CD4-positive, alpha-beta memory T cell (primary cell): ENCODE measurements at regions of chr9 and their contacts with region 1.

Region 1: DNA sequence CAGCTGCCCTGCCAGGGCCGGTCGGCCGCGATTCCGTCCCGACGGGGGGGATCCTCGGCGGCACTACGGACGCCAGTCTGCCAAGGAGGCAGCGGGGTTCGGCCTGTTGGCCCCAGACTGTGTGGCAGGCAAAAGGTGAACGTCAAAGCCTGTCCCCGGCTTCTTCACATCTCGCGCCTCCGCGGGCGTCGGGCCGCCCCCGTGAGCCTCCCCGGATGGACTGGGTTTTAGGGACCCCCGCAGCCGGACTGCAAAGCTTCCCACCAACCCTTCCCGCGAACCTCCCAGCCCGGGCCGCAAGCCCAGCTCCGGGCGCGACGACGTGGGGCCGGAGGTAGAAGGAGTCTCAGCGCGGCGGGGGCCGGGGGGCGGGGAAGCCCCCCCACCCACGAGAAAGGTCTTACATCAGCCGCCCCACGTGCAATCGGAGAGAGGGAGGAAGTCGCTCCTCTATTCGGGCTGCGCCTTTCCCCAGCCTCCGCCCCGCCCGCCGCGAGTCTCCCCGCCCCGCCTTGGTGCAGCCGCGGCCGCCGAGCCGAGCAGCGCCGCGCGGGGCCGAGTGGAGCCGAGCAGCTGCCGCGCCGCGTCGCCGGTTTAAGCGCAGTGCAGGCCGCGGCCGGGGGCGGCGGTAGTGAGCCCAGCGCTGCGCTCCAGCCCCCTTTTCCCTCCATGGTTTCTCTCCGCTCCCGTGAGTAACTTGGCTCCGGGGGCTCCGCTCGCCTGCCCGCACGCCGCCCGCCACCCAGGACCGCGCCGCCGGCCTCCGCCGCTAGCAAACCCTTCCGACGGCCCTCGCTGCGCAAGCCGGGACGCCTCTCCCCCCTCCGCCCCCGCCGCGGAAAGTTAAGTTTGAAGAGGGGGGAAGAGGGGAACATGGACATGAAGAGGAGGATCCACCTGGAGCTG is at the start of gene ANP32B:
- DNase-seq: peak; percentile 92 to 95 (median 94)
- H3K4me3 ChIP-seq: peak within 1 kb of the TSS; percentile 54 to 81
- H3K4me3 Mint-ChIP-seq: peak within 1 kb of the TSS; percentile 77 to 94 (median 86)
- H3K27ac ChIP-seq: peak within 1 kb of the TSS; percentile 85
- H3K27ac Mint-ChIP-seq: peak within 1 kb of the TSS; percentile 81 to 91 (median 89)
- H3K4me1 ChIP-seq: peaks cover 37% of the 10 kb centered on the region
- H3K4me1 Mint-ChIP-seq: peaks cover 17 to 47% (median 31%) of the 10 kb centered on the region in 4 donors
- H3K27me3 ChIP-seq: no peaks in the 10 kb centered on the region
- H3K27me3 Mint-ChIP-seq: no peaks in the 10 kb centered on the region
- total RNA-seq, gene ANP32B: 164 to 168 TPM

Region 2: GRCh38 chr9:97459099-97459725 is 523.7 kb before region 1 on chr9:
- CTCF ChIA-PET with region 1: no interaction called
- POLR2A ChIA-PET with region 1: no interaction called
- intact Hi-C with region 1: no loop called
- DNase-seq: no peak
- H3K4me3 ChIP-seq: no peak overlapping the region
- H3K4me3 Mint-ChIP-seq: no peak overlapping the region
- H3K27ac ChIP-seq: no peak overlapping the region
- H3K27ac Mint-ChIP-seq: no peak overlapping the region
- H3K4me1 ChIP-seq: no peaks in the 10 kb centered on the region
- H3K4me1 Mint-ChIP-seq: no peaks in the 10 kb centered on the region
- H3K27me3 ChIP-seq: no peaks in the 10 kb centered on the region
- H3K27me3 Mint-ChIP-seq: no peaks in the 10 kb centered on the region

Region 3: DNA sequence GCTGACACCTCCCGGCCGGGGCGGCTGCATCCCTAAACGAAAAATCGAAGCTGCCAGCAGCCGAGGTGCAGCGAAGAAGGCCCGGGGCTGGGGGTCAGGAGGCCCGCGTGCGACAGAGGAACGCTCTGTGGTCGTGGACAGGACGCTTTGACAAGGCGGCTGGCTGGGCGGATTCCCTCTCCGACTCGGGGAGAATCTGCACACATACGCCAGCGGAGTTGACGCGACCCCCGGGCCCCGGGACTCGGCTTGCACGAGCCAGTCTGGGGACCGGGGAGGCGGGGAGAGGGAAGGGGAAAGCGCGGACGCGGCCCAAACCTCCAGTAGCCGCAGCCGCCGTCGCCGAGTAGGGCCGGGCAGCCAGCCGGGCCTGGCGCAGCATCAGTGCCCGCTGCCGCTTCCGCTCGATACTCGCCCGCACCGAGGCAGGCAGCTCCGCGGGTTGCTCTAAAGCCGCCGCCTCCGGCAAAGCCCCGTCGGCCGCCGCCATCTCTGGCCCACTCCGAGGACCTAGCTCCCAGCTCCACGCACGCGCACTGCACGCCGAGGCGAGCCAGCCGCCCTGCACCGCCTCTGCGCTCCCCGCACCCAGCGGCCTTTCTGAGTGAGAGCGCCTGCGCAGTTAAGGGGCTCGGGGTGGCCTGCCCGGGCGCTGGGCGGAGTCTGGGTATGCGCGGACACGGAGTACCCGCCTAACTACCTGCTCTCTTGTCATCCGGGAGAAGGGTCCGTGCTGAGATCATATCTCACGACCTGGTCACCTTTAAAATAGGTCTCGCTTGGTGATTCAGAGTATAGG is 285.9 kb before region 1 on chr9 and contains the start of gene XPA:
- CTCF ChIA-PET with region 1: no interaction called
- POLR2A ChIA-PET with region 1: interaction called, 10 read pairs
- intact Hi-C with region 1: loop called (anchors 10 kb)
- DNase-seq: peak; percentile 96 to 97 (median 96)
- H3K4me3 ChIP-seq: peak within 1 kb of the TSS; percentile 4 to 82
- H3K4me3 Mint-ChIP-seq: peak within 1 kb of the TSS; percentile 86 to 96 (median 92)
- H3K27ac ChIP-seq: peak within 1 kb of the TSS; percentile 68
- H3K27ac Mint-ChIP-seq: peak within 1 kb of the TSS; percentile 86 to 98 (median 96)
- H3K4me1 ChIP-seq: peaks cover 44% of the 10 kb centered on the region
- H3K4me1 Mint-ChIP-seq: peaks cover 41 to 56% (median 49%) of the 10 kb centered on the region in 4 donors
- H3K27me3 ChIP-seq: no peaks in the 10 kb centered on the region
- H3K27me3 Mint-ChIP-seq: no peaks in the 10 kb centered on the region
- total RNA-seq, gene XPA: 24.0 to 25.5 TPM

Region 4: DNA sequence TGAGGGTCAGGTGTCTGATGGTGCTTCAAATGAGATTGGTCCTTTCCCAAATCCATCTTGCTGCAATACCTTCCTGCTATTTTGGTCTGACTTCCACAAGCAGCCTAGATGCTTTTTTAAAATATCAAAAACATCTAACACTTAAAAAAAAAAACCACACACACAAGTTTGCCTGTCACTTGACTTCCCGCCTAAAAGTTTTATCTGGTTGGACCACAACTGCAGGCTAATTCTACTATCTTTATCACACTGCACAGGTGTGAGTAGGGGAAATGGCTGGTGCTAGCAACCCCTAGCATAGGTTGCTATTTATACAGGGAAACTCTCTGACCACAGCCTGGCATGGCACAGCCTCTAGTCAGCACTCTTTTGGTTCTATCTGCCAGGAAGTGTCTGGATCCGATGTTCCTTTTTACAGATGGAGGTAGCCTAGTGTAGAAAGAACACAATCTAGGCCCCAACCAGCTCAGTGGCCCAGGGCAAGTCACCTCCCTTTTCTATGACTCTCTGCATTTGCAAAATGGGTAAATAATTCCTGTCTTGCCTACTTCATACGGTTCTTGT is 44.8 kb before region 1 on chr9 and contains the start of gene HEMGN:
- CTCF ChIA-PET with region 1: interaction called, 4 read pairs
- POLR2A ChIA-PET with region 1: interaction called, 11 read pairs
- intact Hi-C with region 1: no loop called
- DNase-seq: peak; percentile 59 to 80 (median 74)
- H3K4me3 ChIP-seq: no peak within 1 kb of the TSS
- H3K4me3 Mint-ChIP-seq: peak within 1 kb of the TSS in 7 of 8 donors; percentile 31 to 79 (median 51)
- H3K27ac ChIP-seq: peak within 1 kb of the TSS; percentile 38
- H3K27ac Mint-ChIP-seq: peak within 1 kb of the TSS; percentile 67 to 93 (median 89)
- H3K4me1 ChIP-seq: peaks cover 32% of the 10 kb centered on the region
- H3K4me1 Mint-ChIP-seq: peaks cover 20 to 37% (median 28%) of the 10 kb centered on the region in 4 donors
- H3K27me3 ChIP-seq: no peaks in the 10 kb centered on the region
- H3K27me3 Mint-ChIP-seq: no peaks in the 10 kb centered on the region
- total RNA-seq, gene HEMGN: 1.6 to 2.3 TPM

Region 5: DNA sequence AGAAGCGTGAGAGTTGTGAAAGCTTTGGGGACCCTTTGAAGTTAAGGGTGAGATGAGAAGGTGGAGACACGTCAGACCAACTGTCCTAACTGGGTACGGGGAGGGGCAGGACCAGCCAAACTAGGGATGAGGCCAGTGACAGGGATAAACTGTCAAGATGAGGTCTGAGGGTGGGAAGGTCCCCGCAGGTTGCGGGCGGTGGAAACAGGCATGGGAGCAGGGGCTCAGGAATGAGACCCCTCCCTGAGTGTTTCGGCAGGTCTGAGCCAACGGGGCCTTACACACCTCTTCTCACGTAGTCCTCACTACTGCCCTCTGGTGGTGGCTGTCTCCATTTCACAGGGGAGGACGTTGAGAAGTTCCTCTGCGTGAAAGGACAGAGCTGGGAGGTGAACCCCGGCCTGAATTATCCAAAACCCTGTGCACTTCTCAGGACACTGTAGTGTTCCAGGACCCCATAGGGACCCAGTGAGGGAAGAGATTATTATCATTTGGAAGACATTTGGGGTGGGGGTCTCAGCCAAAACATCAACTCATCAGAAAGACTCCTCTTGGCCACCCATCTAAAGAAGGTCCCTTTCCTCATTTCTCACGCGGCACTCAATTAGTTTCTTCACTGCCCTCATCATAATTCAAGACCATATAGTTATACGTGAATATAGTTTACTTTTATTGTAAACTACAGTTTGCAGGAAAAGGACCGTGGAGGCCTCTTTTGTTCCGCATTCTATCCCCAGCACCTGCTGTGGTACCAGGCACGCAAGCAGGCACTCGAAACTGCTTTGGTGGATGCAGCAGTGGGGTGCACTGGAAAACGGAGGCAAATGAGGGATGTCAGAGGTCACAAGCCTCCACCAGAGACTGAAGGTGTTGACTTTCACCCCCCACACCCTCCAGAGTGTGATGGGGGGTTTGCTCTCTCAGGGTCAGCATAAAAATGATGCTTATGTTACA is 51.9 kb after region 1 on chr9:
- CTCF ChIA-PET with region 1: interaction called, 16 read pairs
- POLR2A ChIA-PET with region 1: interaction called, 17 read pairs
- intact Hi-C with region 1: loop called (anchors 1 kb)
- DNase-seq: peak; percentile 80 to 88 (median 84)
- H3K4me3 ChIP-seq: no peak overlapping the region
- H3K4me3 Mint-ChIP-seq: peak overlapping the region in 3 of 8 donors; percentile 32 to 64 (median 38)
- H3K27ac ChIP-seq: no peak overlapping the region
- H3K27ac Mint-ChIP-seq: peak overlapping the region in 5 of 7 donors; percentile 28 to 64 (median 61)
- H3K4me1 ChIP-seq: peaks cover 6% of the 10 kb centered on the region
- H3K4me1 Mint-ChIP-seq: peaks cover 6 to 9% (median 6%) of the 10 kb centered on the region in 4 donors
- H3K27me3 ChIP-seq: no peaks in the 10 kb centered on the region
- H3K27me3 Mint-ChIP-seq: peaks cover 1 to 4% of the 10 kb centered on the region in 2 donors

Region 6: DNA sequence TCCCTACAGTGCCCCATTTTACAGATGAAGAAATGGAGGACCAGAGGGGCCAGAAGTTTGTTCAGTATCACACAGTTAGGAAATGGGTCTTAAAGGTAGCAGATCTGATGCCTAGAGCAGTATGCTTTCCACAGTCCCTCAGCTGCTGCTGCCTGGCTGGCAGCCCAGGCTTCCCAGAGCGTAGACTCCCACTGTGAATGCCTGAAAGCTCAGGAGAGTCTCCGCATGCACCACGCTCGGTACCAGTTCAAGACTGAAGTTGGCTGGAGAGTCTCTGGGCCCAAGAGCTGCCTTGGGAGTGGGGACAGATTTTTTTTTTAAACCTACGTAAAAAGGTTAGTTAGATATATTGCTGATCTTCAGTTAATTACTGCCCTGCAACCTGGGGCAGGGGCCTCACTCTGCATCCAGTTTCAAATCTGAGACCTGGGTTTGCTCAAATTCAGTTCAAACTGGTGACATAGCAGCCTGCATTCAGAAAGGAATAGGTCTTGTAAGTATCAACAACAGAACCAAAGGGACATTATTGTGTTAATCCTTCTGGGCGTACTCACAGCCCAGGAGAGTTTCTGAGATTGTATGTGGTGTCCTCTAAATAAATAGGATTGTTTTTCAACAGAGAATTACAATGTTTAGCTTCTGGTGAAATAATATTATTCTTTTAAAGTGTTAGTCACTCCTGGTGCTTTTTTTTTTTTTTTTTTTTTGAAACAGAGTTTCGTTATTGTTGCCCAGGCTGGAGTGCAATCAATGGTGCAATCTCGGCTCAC is 81.9 kb after region 1 on chr9:
- CTCF ChIA-PET with region 1: no interaction called
- POLR2A ChIA-PET with region 1: no interaction called
- intact Hi-C with region 1: no loop called
- DNase-seq: no peak
- H3K4me3 ChIP-seq: no peak overlapping the region
- H3K4me3 Mint-ChIP-seq: no peak overlapping the region
- H3K27ac ChIP-seq: no peak overlapping the region
- H3K27ac Mint-ChIP-seq: peak overlapping the region in 2 of 7 donors; percentile 16 to 29
- H3K4me1 ChIP-seq: no peaks in the 10 kb centered on the region
- H3K4me1 Mint-ChIP-seq: peaks cover 8 to 15% (median 10%) of the 10 kb centered on the region in 4 donors
- H3K27me3 ChIP-seq: no peaks in the 10 kb centered on the region
- H3K27me3 Mint-ChIP-seq: no peaks in the 10 kb centered on the region

Region 7: GRCh38 chr9:98101868-98102273 is 118.9 kb after region 1 on chr9:
- CTCF ChIA-PET with region 1: no interaction called
- POLR2A ChIA-PET with region 1: interaction called, 7 read pairs
- intact Hi-C with region 1: loop called (anchors 5 kb)
- DNase-seq: peak; percentile 85 to 95 (median 94)
- H3K4me3 ChIP-seq: peak overlapping the region in 1 of 2 donors; percentile 40
- H3K4me3 Mint-ChIP-seq: peak overlapping the region; percentile 67 to 85 (median 78)
- H3K27ac ChIP-seq: peak overlapping the region; percentile 64
- H3K27ac Mint-ChIP-seq: peak overlapping the region; percentile 91 to 98 (median 94)
- H3K4me1 ChIP-seq: peaks cover 99% of the 10 kb centered on the region
- H3K4me1 Mint-ChIP-seq: peaks cover 58 to 94% (median 77%) of the 10 kb centered on the region in 4 donors
- H3K27me3 ChIP-seq: no peaks in the 10 kb centered on the region
- H3K27me3 Mint-ChIP-seq: no peaks in the 10 kb centered on the region